ENCODE measurements at regions of chr17 and their contacts with region 1.

Region 1: DNA sequence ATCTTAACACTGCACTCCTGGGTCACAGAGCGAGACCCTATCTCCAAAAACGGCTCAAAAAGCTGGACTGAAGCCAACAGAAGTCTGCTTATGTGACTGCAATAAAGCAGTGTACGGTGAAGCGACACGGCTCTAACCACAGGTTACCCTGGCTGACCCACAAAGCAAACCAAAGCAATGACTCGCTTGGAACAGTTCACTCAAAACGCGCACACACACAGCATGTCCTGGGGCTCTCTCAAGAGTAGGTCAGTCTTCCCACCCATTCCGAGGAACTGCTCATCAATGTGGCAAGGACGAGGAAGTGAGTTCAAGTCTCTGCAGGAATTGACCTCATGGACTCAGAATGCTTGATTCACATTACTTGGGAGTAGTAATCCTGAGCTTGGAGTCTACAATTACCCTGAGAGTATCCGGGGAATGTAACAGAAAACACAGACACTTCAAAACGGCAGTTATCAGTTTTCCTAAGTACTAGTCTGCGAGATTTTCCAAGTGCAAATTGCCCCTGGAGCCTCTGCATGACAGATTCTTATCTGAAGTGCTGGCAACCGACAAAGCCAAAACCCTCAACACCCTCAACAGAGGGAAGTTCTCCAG is 25.4 kb downstream of the PELP1 start:
- H3K4me3 Mint-ChIP-seq: peak overlapping the region; percentile 59
- H3K27ac Mint-ChIP-seq: peak overlapping the region; percentile 91
- H3K4me1 Mint-ChIP-seq: peaks cover 92% of the 10 kb centered on the region
- H3K27me3 Mint-ChIP-seq: no peaks in the 10 kb centered on the region

Region 2: GRCh38 chr17:4648741-4649140 is 29.8 kb before region 1 on chr17:
- intact Hi-C with region 1: loop called (anchors 5 kb)
- H3K4me3 Mint-ChIP-seq: no peak overlapping the region
- H3K27ac Mint-ChIP-seq: peak overlapping the region; percentile 62
- H3K4me1 Mint-ChIP-seq: peaks cover 77% of the 10 kb centered on the region
- H3K27me3 Mint-ChIP-seq: no peaks in the 10 kb centered on the region

Region 3: GRCh38 chr17:4658478-4659305 is 19.8 kb before region 1 on chr17:
- intact Hi-C with region 1: loop called (anchors 1 kb)
- H3K4me3 Mint-ChIP-seq: peak overlapping the region; percentile 61
- H3K27ac Mint-ChIP-seq: peak overlapping the region; percentile 91
- H3K4me1 Mint-ChIP-seq: peaks cover 65% of the 10 kb centered on the region
- H3K27me3 Mint-ChIP-seq: no peaks in the 10 kb centered on the region